ENCODE measurements at regions of chr19 and their contacts with region 1.

Region 1: DNA sequence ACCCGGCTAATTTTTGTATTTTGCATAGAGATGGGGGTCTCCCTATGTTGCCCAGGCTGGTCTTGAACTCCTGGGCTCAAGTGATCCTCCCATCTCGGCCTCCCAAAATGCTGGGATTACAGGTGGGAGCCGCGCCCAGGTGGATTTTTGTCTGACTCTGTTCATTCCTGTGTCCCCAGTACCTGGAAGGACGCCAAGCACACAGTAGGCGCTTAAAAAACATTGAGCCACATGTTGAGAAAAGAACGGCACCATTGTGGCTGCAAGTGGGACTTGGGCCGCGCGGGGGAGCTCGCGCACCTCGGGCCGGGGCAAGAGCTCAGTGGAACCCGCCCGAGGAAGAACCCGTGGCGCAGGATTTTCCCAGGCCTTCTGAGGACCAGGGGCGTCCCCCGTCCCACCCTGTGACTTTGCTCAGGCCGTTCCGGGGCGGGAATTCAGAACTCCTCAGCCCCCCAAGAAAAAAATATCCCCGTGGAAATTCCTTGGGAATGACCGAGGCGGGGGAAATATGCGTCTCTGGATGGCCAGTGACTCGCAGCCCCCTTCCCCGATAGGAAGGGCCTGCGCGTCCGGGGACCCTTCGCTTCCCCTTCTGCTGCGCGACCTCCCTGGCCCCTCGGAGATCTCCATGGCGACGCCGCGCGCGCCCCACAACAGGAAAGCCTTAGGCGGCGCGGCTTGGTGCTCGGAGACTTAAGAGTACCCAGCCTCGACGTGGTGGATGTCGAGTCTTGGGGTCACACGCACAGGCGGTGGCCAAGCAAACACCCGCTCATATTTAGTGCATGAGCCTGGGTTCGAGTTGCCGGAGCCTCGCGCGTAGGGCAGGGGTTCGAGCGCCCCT is 1.4 kb upstream of the ICAM1 start:
- DNase-seq: peak in 1 of 2 experiments; percentile 99
- H3K4me3 ChIP-seq: peak overlapping the region; percentile 30 to 59 (median 38); a peak in 5 of 8 replicates
- H3K27ac ChIP-seq: no peak overlapping the region
- H3K4me1 ChIP-seq: peaks cover 0 to 8% (median 5%) of the 10 kb centered on the region in 4 experiments; a peak in 5 of 7 replicates
- H3K27me3 ChIP-seq: peaks cover 9 to 25% (median 23%) of the 10 kb centered on the region in 4 experiments
- CTCF ChIP-seq: peak; percentile 79 to 95 (median 88)
- EP300 ChIP-seq: no peak; a peak in 1 of 3 replicates
- POLR2A ChIP-seq: no peak
- RAD21 ChIP-seq: peak; percentile 94 to 97

Region 2: GRCh38 chr19:10209315-10209714 is 60.2 kb before region 1 on chr19:
- CTCF ChIA-PET with region 1: no interaction called
- POLR2A ChIA-PET with region 1: no interaction called
- DNase-seq: no peak
- H3K4me3 ChIP-seq: no peak overlapping the region
- H3K27ac ChIP-seq: no peak overlapping the region
- H3K4me1 ChIP-seq: 0 out of 7 replicates have a peak, but pooled peaks cover 0 to 3% (median 0%) of the 10 kb centered on the region in 4 experiments
- H3K27me3 ChIP-seq: no peaks in the 10 kb centered on the region
- CTCF ChIP-seq: no peak
- EP300 ChIP-seq: no peak
- POLR2A ChIP-seq: no peak
- RAD21 ChIP-seq: no peak

Region 3: GRCh38 chr19:10286803-10287737 is 17.5 kb after region 1 on chr19 and contains the start of gene ICAM4:
- CTCF ChIA-PET with region 1: interaction called, 94 read pairs
- POLR2A ChIA-PET with region 1: interaction called, 16 read pairs
- DNase-seq: peak in 1 of 2 experiments; percentile 80
- H3K4me3 ChIP-seq: peak within 1 kb of the TSS; percentile 20 to 63 (median 34)
- H3K27ac ChIP-seq: no peak within 1 kb of the TSS
- H3K4me1 ChIP-seq: peaks cover 0 to 38% (median 21%) of the 10 kb centered on the region in 4 experiments; a peak in 6 of 7 replicates
- H3K27me3 ChIP-seq: peaks cover 33 to 53% (median 44%) of the 10 kb centered on the region in 4 experiments
- CTCF ChIP-seq: no peak
- EP300 ChIP-seq: no peak
- POLR2A ChIP-seq: no peak
- RAD21 ChIP-seq: no peak
- total RNA-seq, gene ICAM4: 1.3 and 1.5 TPM in 2 replicates

Region 4: GRCh38 chr19:10380313-10381102 is 111.0 kb after region 1 on chr19 and contains the start of gene TYK2:
- CTCF ChIA-PET with region 1: interaction called, 122 read pairs
- POLR2A ChIA-PET with region 1: interaction called, 10 read pairs
- DNase-seq: peak; percentile 97 to 98
- H3K4me3 ChIP-seq: peak within 1 kb of the TSS; percentile 73 to 92 (median 87)
- H3K27ac ChIP-seq: peak within 1 kb of the TSS; percentile 97
- H3K4me1 ChIP-seq: peaks cover 0 to 5% (median 1%) of the 10 kb centered on the region in 4 experiments; a peak in 1 of 7 replicates
- H3K27me3 ChIP-seq: no peaks in the 10 kb centered on the region
- CTCF ChIP-seq: no peak
- EP300 ChIP-seq: no peak
- POLR2A ChIP-seq: peak; percentile 88 to 98
- RAD21 ChIP-seq: no peak
- total RNA-seq, gene TYK2: 40.8 and 42.7 TPM in 2 replicates

Measured in H1 (cell line).